ENCODE measurements at regions of chr2 and their contacts with region 1.

Region 1: DNA sequence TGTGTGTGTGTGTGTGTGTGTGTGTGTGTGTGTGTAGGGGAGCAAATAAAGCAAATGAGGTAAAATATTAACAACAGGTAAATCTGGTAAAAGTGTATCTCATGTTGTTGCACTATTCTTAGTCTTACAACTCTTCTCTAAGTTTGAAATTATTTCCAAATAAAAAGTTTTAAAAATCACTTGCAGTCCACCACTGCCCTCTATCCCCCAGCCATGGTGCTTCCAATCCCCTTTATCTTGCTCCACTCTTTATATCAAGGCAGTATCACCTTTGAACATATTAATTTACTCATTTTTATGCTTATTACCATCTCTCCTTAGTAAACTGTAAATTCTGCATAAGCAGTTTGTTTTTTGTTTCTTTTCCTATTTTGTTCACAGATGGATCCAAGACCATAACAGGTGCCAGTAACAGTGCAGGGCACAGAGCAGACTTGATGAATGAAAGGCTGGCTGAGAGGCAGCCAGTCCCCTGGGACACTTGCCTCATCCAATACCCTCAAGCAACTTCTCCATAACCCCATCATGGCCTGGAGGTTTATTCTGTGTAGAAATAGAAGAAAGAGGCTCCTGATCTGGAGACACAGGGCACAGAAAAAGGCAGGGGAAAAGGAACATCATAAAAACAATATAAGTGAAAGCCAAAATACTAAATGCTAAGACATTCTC is 67.6 kb downstream of the LDAH start:
- DNase-seq: no peak
- ATAC-seq: no peak
- H3K4me3 ChIP-seq: no peak overlapping the region
- H3K4me3 Mint-ChIP-seq: no peak overlapping the region
- H3K27ac ChIP-seq: no peak overlapping the region
- H3K27ac Mint-ChIP-seq: no peak overlapping the region
- H3K4me1 ChIP-seq: no peaks in the 10 kb centered on the region
- H3K4me1 Mint-ChIP-seq: peaks cover 0 to 10% (median 0%) of the 10 kb centered on the region in 3 donors
- H3K27me3 ChIP-seq: no peaks in the 10 kb centered on the region
- H3K27me3 Mint-ChIP-seq: no peaks in the 10 kb centered on the region

Region 2: DNA sequence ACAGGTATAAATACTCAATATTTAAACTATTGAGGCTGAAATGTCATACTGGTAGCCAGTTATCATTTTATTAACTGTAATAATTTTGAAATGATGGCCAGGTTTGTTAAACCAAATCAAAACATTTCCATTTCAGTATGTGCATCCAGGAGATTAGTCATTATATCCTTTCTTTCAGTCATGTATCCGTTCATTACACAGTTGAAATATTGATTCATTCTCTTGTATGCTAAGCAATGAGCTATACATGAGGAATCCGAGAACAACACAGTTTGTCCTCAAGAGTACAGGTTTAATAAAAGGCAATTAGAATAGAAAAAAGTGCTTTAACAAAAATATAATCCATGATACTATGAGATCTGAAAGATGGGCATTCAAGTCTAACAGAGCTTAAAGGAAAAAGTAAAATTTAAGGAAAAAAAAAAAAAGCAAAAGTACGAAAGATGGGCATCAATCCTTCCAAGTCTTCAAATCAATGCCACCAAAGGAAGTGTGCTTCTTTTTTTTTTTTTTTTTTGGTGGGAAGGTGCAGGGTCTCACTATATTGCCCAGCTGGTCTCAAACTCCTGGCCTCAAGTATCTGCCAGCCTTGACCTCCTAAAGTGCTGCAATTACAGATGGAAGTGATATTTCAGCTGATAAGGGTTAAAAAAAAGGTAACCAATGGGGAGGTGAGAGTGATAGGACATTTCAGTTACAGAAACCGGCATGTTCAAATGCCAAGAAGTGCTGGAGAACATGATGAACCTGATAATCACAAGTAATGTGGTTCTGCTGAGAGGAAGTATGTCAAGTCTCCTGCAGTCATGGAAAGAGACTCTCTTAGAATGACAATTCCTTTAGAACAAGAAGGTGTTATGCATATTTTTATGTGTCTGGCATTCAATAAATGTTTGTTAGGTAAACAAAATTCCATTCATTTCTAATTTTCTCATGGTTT is 440.4 kb before region 1 on chr2:
- CTCF ChIA-PET with region 1: no interaction called
- POLR2A ChIA-PET with region 1: interaction called in 1 of 2 experiments, 11 read pairs
- DNase-seq: no peak
- ATAC-seq: no peak
- H3K4me3 ChIP-seq: no peak overlapping the region
- H3K4me3 Mint-ChIP-seq: no peak overlapping the region
- H3K27ac ChIP-seq: no peak overlapping the region
- H3K27ac Mint-ChIP-seq: no peak overlapping the region
- H3K4me1 ChIP-seq: peaks cover 0 to 9% of the 10 kb centered on the region in 2 experiments
- H3K4me1 Mint-ChIP-seq: peaks cover 37 to 54% (median 51%) of the 10 kb centered on the region in 3 donors
- H3K27me3 ChIP-seq: no peaks in the 10 kb centered on the region
- H3K27me3 Mint-ChIP-seq: no peaks in the 10 kb centered on the region

Region 3: DNA sequence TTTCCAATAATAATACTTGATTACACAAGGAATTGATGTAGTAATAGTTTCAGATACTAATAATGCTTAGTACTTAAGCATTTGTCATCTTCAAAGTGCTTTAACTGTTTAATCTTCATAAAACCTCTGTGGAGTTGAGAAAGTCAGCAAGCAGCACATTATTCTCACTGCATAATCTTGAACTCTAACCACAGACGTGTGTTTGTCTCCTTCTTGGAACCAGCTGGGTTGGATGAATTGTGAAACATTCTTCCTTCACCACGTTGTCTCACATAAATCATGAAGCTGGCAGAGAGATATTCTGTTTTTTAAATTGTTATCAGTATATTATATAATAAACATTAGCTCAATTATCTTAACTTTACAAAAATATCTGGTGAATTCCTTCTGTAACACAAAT is 122.7 kb after region 1 on chr2:
- CTCF ChIA-PET with region 1: no interaction called
- POLR2A ChIA-PET with region 1: no interaction called
- DNase-seq: no peak
- ATAC-seq: no peak
- H3K4me3 ChIP-seq: no peak overlapping the region
- H3K4me3 Mint-ChIP-seq: no peak overlapping the region
- H3K27ac ChIP-seq: no peak overlapping the region
- H3K27ac Mint-ChIP-seq: no peak overlapping the region
- H3K4me1 ChIP-seq: no peaks in the 10 kb centered on the region
- H3K4me1 Mint-ChIP-seq: no peaks in the 10 kb centered on the region
- H3K27me3 ChIP-seq: peaks cover 0 to 10% of the 10 kb centered on the region in 2 experiments
- H3K27me3 Mint-ChIP-seq: peaks cover 11 to 22% of the 10 kb centered on the region in 2 donors